PC-3 (cell line): ENCODE measurements at regions of chr17 and their contacts with region 1.

Region 1: DNA sequence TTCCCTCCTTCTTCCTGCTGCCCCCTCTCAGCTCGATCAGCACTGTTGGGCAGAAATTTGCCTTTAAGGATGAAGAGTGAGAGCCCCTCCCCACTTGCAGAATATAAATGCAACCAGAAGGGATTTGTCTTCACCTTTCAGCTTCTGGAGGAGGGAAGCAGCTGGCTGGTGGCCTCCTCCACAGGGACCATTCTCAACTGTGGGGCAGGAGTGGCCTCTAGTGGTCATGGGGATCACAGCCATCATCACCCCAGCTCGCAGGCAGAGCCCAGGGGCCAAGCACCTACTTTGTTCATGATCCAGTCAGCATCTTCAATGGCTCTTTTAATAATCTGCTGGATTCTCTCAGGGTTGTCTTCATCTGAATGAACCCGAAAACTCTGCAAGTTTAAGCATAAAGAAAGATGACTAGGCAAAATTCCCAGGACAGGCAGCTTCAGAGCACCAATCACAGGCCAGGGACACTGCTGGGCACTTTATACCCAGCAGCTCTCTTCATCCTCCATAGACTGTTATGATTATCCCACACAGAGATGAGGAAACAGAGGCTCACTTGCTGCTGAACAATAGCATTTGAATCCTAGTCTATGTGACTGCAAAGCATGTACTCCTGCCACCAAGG is 13.1 kb downstream of the LYRM9 start:
- DNase-seq: peak; percentile 69
- ATAC-seq: peak; percentile 94
- H3K4me3 ChIP-seq: no peak overlapping the region
- H3K27ac ChIP-seq: no peak overlapping the region
- H3K4me1 ChIP-seq: no peaks in the 10 kb centered on the region
- H3K27me3 ChIP-seq: no peaks in the 10 kb centered on the region
- CTCF ChIP-seq: peak; percentile 82

Region 2: GRCh38 chr17:27760069-27760885 is 119.8 kb before region 1 on chr17:
- CTCF ChIA-PET with region 1: interaction called, 8 read pairs
- POLR2A ChIA-PET with region 1: no interaction called
- intact Hi-C with region 1: loop called (anchors 1 kb)
- DNase-seq: peak; percentile 57
- ATAC-seq: peak; percentile 54
- H3K4me3 ChIP-seq: no peak overlapping the region
- H3K27ac ChIP-seq: no peak overlapping the region
- H3K4me1 ChIP-seq: no peaks in the 10 kb centered on the region
- H3K27me3 ChIP-seq: no peaks in the 10 kb centered on the region
- CTCF ChIP-seq: peak; percentile 89

Region 3: DNA sequence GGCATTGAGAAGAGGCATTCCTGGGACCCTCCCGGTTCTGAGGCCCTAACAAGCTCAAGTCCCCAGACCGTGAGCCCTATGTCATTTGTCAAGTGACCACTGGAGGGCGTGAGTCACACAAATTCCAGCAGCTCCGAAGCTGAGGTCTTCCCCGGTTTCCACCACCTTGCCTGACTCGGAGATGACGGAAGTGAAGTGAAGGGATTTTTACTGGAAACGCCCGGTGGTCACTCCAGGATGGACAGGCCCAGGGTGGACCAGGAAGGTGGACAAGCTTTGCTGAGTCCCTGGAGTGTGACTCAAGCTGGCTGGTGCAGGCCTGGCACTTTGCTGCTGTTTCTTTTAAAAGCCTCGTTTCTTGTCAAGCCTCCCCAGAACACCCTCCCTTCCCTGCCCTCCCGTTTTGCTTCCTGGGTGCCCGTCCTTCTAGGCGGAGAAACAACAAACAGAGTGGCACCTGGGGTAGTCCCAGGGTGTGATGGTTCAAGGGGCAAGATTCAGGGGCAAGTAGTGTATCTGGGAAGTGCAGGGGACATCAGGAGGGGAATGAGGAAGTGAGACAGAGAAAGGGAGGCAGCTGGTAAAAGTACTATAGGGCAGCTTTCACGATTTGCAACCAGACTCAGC is 74.5 kb before region 1 on chr17:
- CTCF ChIA-PET with region 1: interaction called, 24 read pairs
- POLR2A ChIA-PET with region 1: no interaction called
- intact Hi-C with region 1: loop called (anchors 1 kb)
- DNase-seq: peak; percentile 83
- ATAC-seq: peak; percentile 97
- H3K4me3 ChIP-seq: peak overlapping the region; percentile 64
- H3K27ac ChIP-seq: no peak overlapping the region
- H3K4me1 ChIP-seq: peaks cover 4% of the 10 kb centered on the region; the same call in 1 of the 2 replicates
- H3K27me3 ChIP-seq: peaks cover 3% of the 10 kb centered on the region; the same call in 1 of the 2 replicates
- CTCF ChIP-seq: peak; percentile 76